ENCODE measurements at regions of chr16 and their contacts with region 1.

Region 1: DNA sequence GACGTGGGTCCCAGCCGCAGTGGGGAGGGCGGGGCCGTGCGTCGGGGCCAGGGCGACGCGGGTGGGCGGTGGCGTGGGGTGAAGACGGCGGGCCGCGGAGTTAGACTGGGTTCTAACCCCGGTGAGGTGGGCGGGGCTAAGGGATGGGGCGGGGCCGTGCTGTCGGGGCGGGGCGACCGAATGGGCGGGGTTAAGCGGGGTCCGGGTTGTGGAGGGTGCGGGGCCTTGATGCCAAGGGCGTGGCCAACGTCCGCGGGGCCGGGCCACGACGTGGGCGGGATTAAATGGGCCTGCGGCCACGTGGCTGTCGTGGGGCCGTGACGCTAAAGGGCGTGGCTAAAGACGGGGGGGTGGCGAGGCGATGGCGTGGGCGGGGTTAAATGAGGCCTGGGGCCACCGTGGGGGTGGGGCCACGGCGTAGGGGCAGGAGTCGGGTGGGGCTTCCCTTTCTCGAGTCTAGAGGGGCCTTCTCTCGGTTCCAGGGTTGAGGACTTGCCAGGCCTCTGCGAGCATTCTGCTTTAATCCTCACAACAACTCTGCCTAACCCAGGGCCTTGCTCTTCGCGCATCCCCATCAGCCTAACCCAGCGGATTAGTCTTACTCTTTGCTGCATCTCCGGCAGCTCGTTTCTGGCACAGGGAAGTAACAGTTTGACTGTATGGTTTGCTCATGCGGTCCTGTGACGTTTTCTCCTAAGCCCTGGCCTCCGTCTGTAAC is 739 bp downstream of the TCF25 start:
- DNase-seq: peak; percentile 97
- H3K4me3 Mint-ChIP-seq: peak overlapping the region; percentile 85
- H3K27ac Mint-ChIP-seq: peak overlapping the region; percentile 98
- H3K4me1 Mint-ChIP-seq: peaks cover 14% of the 10 kb centered on the region
- H3K27me3 Mint-ChIP-seq: no peaks in the 10 kb centered on the region

Region 2: DNA sequence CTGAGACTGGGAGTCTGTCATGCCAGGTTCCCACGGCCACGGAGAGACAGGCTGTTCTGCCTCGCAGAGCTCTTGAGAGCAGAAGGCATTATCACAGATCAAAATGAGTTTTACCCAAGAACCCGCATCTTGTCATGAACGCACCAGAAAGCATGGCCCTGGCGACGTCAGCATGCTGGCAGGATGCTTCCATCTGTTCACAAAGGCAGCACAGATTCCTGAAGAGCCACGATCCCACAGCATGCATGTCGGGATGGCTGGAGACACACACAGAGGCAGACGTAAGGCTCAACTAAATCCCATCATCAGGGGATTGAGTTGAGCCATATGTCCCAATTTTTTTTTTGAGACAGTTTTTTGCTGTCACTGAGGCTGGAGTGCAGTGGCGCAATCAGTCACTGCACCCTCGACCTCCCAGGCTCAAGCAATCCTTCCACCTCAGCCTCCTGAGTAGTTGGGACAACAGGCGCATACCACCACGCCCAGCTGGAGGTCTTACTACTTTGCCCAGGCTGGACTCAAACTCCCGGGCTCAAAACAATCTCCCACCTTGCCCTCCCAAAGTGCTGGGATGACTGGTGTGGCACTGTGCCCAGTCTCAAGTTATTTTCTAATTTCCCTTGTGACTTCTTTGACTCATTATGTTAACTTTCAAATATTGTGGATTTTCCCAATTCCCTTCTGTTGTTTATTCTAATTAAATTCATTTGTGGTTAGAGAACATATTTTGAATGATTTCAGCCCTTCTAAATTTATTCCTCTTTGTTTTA is 68.8 kb before region 1 on chr16:
- CTCF ChIA-PET with region 1: no interaction called
- POLR2A ChIA-PET with region 1: no interaction called
- intact Hi-C with region 1: no loop called
- DNase-seq: no peak
- H3K4me3 Mint-ChIP-seq: no peak overlapping the region
- H3K27ac Mint-ChIP-seq: no peak overlapping the region
- H3K4me1 Mint-ChIP-seq: no peaks in the 10 kb centered on the region
- H3K27me3 Mint-ChIP-seq: no peaks in the 10 kb centered on the region

Region 3: DNA sequence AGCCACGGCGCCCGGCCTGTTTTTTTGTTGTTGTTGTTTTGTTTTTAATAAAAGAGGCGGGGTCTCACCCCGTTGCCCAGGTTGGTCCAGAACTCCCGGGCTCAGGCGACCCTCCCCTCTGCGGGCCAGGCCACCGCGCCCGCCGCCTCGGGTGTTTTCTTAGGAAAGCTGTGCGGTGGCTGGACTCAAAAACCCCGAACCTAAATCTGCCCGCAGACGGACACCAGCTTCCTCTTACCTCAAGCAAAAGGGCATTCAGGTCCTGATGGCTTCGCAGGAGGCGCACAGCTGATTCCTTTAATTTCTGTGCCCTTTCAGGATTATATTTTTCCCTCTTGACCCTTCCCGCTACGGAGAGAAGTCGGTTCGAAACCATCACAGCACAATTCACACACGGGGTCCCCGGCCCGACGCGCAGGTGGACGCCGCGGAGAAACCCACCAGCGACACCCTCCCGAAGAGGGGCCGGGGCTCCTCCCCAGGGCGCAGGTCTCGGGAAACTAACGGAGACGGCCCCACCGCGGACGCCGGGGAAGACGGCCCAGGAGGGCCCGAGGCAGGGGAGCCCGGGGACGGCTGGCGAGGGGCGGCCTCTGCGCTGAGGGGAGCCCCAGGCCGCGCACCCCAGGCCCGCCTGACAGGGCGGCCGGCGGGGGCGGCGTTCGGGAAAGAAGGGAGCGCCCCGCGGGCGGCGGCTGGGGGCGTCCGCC is 58.3 kb before region 1 on chr16:
- CTCF ChIA-PET with region 1: no interaction called
- POLR2A ChIA-PET with region 1: interaction called, 10 read pairs
- intact Hi-C with region 1: loop called (anchors 2 kb)
- DNase-seq: peak; percentile 25
- H3K4me3 Mint-ChIP-seq: peak overlapping the region; percentile 85
- H3K27ac Mint-ChIP-seq: peak overlapping the region; percentile 18
- H3K4me1 Mint-ChIP-seq: peaks cover 37% of the 10 kb centered on the region
- H3K27me3 Mint-ChIP-seq: no peaks in the 10 kb centered on the region